Heart right ventricle (tissue), 16 donors: ENCODE measurements at regions of chr17 and their contacts with region 1.

Region 1: GRCh38 chr17:68972119-68972704 is 17.0 kb upstream of the ABCA8 start:
- DNase-seq: no peak
- ATAC-seq: peak in 5 of 8 donors; percentile 49 to 66 (median 56)
- H3K4me3 ChIP-seq: no peak overlapping the region
- H3K27ac ChIP-seq: peak overlapping the region in 3 of 10 donors; percentile 18 to 38 (median 24)
- H3K4me1 ChIP-seq: peaks cover 0 to 6% (median 0%) of the 10 kb centered on the region in 9 donors
- H3K27me3 ChIP-seq: peaks cover 0 to 4% (median 0%) of the 10 kb centered on the region in 7 donors
- CTCF ChIP-seq: peak; percentile 21 to 70 (median 61)

Region 2: GRCh38 chr17:68771867-68772515 is 200.2 kb before region 1 on chr17:
- intact Hi-C with region 1: loop called (anchors 2 to 10 kb)
- DNase-seq: peak in 1 of 2 donors; percentile 29
- ATAC-seq: peak; percentile 57 to 84 (median 76)
- H3K4me3 ChIP-seq: peak overlapping the region in 7 of 10 donors; percentile 16 to 40 (median 31)
- H3K27ac ChIP-seq: peak overlapping the region in 8 of 10 donors; percentile 2 to 83 (median 64)
- H3K4me1 ChIP-seq: peaks cover 0 to 29% (median 22%) of the 10 kb centered on the region in 9 donors
- H3K27me3 ChIP-seq: no peaks in the 10 kb centered on the region
- CTCF ChIP-seq: peak; percentile 41 to 71 (median 69)

Region 3: DNA sequence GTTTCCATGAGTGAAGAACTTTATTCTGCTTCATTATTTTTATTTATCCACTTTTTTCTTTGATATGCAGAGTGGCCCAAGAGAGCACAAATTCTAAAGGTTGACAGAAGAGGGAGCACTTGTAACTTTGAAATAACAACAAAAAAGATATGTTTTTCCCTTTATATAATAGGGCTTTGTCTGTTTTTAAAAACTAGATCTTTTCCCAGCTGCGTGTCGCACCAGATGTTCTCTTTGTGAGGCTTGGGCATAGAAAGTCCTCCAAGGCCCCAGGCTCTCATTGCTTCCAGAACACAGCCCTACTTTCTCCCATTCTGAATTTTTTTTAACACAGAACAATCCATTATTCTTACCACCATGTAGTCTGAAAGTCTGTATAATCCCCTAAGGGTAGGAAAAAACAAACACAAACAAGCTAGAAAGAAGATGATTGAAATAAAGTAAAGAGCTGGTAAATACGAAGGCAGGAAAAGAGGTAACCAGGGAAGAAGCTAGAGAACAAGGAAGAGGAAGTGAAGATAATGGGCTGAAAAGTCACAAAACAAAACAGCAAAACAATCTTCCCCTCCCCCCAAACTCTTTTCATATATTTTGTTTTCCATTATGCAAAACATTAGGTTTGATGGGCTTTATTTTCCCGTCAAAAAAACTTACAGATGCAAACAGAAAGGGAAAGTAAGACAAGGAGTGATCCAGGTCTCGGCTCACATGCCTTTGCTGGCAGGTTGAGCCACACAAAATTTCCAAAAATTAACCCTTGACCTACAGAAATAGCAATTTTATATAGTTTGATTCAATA is 177.4 kb before region 1 on chr17:
- intact Hi-C with region 1: loop called in 2 of 10 experiments (anchors 5 kb)
- DNase-seq: peak in 1 of 2 donors; percentile 53
- ATAC-seq: peak; percentile 45 to 84 (median 74)
- H3K4me3 ChIP-seq: peak overlapping the region in 1 of 10 donors; percentile 12
- H3K27ac ChIP-seq: peak overlapping the region; percentile 53 to 89 (median 74)
- H3K4me1 ChIP-seq: peaks cover 0 to 55% (median 33%) of the 10 kb centered on the region in 9 donors
- H3K27me3 ChIP-seq: peaks cover 0 to 6% (median 0%) of the 10 kb centered on the region in 7 donors
- CTCF ChIP-seq: peak in 7 of 9 donors; percentile 34 to 52 (median 44)

Region 4: DNA sequence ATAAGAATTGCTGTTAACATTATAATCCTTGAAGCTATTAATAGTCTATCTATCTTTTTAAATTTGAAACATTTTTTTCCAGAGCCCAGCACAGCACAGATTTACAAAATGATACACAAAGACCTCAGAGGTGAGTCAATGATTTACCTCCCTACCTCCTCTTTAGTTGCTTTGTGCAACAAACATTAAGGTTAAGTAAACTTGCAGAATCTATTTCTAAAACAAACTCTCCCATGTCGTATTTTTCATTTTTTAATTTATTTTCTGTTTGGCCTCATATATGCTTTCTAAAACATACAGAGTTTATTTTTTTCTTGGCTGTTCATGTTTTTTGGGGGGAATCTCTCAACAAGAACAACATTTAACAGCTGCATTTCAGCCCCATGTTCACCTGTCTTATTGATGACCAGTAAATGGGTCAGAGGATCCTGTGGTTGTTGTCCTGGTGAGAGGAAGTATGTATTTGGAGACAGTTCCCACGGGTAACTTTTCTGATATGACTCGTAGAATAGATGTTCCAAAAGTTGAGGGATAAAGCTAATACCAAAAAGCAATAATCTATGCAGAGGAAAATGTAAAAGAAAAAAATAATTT is 45.9 kb after region 1 on chr17:
- intact Hi-C with region 1: no loop called
- DNase-seq: no peak
- ATAC-seq: no peak
- H3K4me3 ChIP-seq: no peak overlapping the region
- H3K27ac ChIP-seq: no peak overlapping the region
- H3K4me1 ChIP-seq: no peaks in the 10 kb centered on the region
- H3K27me3 ChIP-seq: no peaks in the 10 kb centered on the region
- CTCF ChIP-seq: no peak